Naive thymus-derived CD8-positive, alpha-beta T cell (primary cell): ENCODE measurements at regions of chr6 and their contacts with region 1.

Region 1: GRCh38 chr6:142845624-142846458 is 99.1 kb downstream of the HIVEP2 start:
- DNase-seq: peak; percentile 39 to 79 (median 61)
- ATAC-seq: peak; percentile 63 to 78
- H3K4me3 Mint-ChIP-seq: peak overlapping the region; percentile 77 to 90 (median 86)
- H3K27ac Mint-ChIP-seq: peak overlapping the region; percentile 91 to 98 (median 96)
- H3K4me1 Mint-ChIP-seq: peaks cover 40 to 98% (median 89%) of the 10 kb centered on the region in 4 donors
- H3K27me3 Mint-ChIP-seq: no peaks in the 10 kb centered on the region

Region 2: GRCh38 chr6:142819603-142820337 is 26.1 kb before region 1 on chr6:
- POLR2A ChIA-PET with region 1: interaction called, 16 read pairs
- DNase-seq: peak in 5 of 10 donors; percentile 17 to 45 (median 30)
- ATAC-seq: peak; percentile 52 to 74
- H3K4me3 Mint-ChIP-seq: peak overlapping the region; percentile 81 to 90 (median 88)
- H3K27ac Mint-ChIP-seq: peak overlapping the region; percentile 84 to 98 (median 95)
- H3K4me1 Mint-ChIP-seq: peaks cover 36 to 88% (median 80%) of the 10 kb centered on the region in 4 donors
- H3K27me3 Mint-ChIP-seq: no peaks in the 10 kb centered on the region